ENCODE measurements at regions of chr6 and their contacts with region 1.

Region 1: GRCh38 chr6:166402582-166403277 is 20.0 kb upstream of the MPC1 start:
- DNase-seq: no peak
- H3K4me3 Mint-ChIP-seq: no peak overlapping the region
- H3K27ac Mint-ChIP-seq: no peak overlapping the region
- H3K4me1 Mint-ChIP-seq: peaks cover 8% of the 10 kb centered on the region
- H3K27me3 Mint-ChIP-seq: no peaks in the 10 kb centered on the region
- CTCF ChIP-seq: no peak

Region 2: GRCh38 chr6:165729307-165729936 is 673.3 kb before region 1 on chr6:
- CTCF ChIA-PET with region 1: no interaction called
- POLR2A ChIA-PET with region 1: no interaction called
- intact Hi-C with region 1: no loop called
- DNase-seq: peak; percentile 54
- H3K4me3 Mint-ChIP-seq: no peak overlapping the region
- H3K27ac Mint-ChIP-seq: no peak overlapping the region
- H3K4me1 Mint-ChIP-seq: no peaks in the 10 kb centered on the region
- H3K27me3 Mint-ChIP-seq: no peaks in the 10 kb centered on the region
- CTCF ChIP-seq: peak; percentile 60

Region 3: GRCh38 chr6:166156942-166157341 is 245.8 kb before region 1 on chr6:
- CTCF ChIA-PET with region 1: interaction called, 23 read pairs
- POLR2A ChIA-PET with region 1: no interaction called
- intact Hi-C with region 1: loop called (anchors 1 kb)
- DNase-seq: peak; percentile 33
- H3K4me3 Mint-ChIP-seq: no peak overlapping the region
- H3K27ac Mint-ChIP-seq: no peak overlapping the region
- H3K4me1 Mint-ChIP-seq: no peaks in the 10 kb centered on the region
- H3K27me3 Mint-ChIP-seq: no peaks in the 10 kb centered on the region
- CTCF ChIP-seq: peak; percentile 44

Region 4: DNA sequence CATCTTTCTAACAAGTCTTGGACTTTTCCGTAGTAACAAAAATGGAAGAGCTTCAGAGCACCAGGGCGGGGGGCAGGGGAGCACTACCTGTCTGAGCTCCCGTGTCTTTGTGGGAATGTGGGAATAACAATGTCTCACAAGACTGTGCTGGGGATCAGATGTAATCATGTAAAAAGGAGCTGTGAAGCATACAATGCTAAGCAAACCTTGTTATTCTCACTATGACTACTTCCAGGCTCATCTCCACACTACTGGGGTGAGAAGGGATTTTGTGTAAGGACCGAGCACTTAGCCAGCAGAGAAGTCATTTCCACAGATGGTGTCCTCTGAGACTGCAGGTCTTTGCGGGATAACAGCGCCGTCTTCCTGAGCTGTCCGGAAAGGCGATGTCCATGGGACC is 121.6 kb before region 1 on chr6:
- CTCF ChIA-PET with region 1: interaction called, 119 read pairs
- POLR2A ChIA-PET with region 1: interaction called, 4 read pairs
- intact Hi-C with region 1: no loop called
- DNase-seq: no peak
- H3K4me3 Mint-ChIP-seq: no peak overlapping the region
- H3K27ac Mint-ChIP-seq: no peak overlapping the region
- H3K4me1 Mint-ChIP-seq: no peaks in the 10 kb centered on the region
- H3K27me3 Mint-ChIP-seq: peaks cover 56% of the 10 kb centered on the region
- CTCF ChIP-seq: no peak